HEK293T (cell line): ENCODE measurements at regions of chr17 and their contacts with region 1.

Region 1: DNA sequence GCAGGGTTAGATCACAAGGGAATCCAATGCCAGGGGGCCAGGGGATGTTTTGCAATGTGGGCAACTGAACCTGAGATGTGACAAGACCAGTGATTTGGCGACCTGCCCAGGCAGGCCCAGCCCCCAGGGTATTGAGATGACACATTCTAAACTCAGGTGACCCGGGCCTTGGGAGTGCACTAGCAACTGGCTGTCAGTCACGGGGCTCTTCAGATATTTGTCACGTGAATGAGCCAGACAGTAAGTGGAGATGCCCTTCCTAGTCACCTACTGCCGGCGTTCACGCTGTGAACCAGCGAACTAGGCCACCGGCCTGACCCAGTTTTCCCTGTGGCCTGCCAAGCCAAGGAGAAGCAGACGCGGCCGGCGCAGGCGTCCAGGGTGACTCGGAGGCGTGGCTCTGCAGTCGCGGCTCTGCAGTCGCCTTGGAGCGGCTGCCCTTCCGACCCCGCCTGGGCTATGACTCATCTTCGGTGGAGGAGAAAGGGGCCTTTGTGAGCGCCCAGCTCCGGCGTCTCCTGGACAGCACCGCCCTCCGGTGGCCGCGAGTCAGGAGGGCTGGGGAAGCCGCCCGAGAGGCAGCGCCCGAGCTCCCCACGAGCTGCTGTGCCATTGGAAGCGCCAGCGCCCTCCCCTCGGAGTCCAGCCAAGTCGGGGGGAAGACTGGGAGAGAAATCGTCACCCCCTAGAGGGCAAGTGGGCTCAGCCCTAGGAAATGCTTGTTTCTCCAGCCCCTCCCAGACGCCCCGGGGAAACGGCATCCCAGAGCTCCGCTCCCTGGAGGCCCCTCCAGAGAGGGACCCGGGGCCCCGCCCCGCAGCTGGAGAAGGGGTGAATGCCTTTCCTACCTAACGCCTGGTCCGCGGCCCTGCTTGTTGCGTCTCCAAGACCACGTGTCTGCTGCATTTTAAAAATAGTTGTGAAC is 38.8 kb downstream of the WSB1 start:
- DNase-seq: peak; percentile 79

Region 2: DNA sequence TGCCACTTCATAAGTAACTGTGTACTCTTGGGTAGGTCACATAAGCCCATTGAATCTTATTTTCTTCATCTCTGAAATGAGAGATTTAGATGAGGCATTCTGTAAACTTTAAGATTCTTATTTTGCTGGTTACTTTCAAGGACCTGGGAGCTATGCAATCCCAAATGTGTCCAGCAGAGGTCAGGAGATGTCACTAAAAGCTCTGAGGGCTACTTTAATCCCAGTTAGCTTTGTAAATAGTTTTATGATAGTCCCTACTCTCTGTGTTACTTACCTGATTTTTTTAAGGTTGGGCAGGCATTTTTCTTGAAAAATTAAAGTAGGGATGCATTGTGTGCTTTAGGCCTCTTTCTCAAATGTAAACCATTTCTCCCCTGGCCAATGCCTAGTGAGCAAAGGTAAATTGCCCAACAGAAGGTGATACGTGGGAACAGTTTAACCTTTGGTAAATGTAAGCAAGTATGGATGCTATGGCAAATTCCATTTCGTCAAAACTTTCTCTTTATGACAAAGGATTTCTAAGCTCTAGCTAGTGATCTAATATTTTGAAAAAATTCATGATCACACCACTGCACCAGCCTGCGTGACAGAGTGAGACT is 95.9 kb before region 1 on chr17:
- CTCF ChIA-PET with region 1: interaction called, 19 read pairs
- POLR2A ChIA-PET with region 1: interaction called, 7 read pairs
- DNase-seq: peak; percentile 32

Region 3: GRCh38 chr17:27245230-27245696 is 87.5 kb before region 1 on chr17:
- CTCF ChIA-PET with region 1: interaction called, 16 read pairs
- POLR2A ChIA-PET with region 1: interaction called, 8 read pairs
- DNase-seq: peak; percentile 69

Region 4: DNA sequence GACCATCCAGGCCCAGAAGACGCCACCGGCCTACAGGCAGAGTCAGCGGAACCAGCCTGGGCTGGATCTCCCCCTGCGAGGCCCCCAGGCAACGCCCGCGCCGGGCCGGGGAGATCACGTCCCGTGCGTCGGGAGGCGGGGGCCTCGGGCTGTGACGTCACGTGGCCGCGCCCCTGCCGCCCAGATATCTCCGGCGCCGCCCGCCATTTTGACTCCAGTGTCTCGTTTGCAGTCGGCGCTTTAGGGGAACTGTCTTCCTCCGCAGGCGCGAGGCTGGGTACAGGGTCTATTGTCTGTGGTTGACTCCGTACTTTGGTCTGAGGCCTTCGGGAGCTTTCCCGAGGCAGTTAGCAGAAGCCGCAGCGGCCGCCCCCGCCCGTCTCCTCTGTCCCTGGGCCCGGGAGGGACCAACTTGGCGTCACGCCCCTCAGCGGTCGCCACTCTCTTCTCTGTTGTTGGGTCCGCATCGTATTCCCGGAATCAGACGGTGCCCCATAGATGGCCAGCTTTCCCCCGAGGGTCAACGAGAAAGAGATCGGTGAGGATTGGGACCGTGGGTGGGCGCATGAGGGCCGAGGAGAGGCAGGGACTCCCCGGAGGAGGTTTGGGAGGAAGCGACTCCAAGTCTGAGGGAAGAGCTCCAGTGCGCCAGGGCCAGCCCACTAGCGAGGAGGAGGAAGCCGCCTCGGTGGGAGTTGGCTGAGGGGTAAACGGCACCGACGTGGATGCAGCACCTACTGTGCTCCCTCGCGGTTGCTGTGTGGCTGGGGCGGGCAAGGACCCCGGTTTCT is 38.7 kb before region 1 on chr17 and contains the start of gene WSB1:
- CTCF ChIA-PET with region 1: no interaction called
- POLR2A ChIA-PET with region 1: interaction called, 17 read pairs
- DNase-seq: peak; percentile 86

Region 5: GRCh38 chr17:27320222-27320560 is 12.6 kb before region 1 on chr17:
- CTCF ChIA-PET with region 1: no interaction called
- POLR2A ChIA-PET with region 1: no interaction called
- DNase-seq: no peak

Region 6: GRCh38 chr17:27345141-27345904 is 12.6 kb after region 1 on chr17:
- CTCF ChIA-PET with region 1: interaction called, 3 read pairs
- POLR2A ChIA-PET with region 1: interaction called, 13 read pairs
- DNase-seq: no peak

Region 7: DNA sequence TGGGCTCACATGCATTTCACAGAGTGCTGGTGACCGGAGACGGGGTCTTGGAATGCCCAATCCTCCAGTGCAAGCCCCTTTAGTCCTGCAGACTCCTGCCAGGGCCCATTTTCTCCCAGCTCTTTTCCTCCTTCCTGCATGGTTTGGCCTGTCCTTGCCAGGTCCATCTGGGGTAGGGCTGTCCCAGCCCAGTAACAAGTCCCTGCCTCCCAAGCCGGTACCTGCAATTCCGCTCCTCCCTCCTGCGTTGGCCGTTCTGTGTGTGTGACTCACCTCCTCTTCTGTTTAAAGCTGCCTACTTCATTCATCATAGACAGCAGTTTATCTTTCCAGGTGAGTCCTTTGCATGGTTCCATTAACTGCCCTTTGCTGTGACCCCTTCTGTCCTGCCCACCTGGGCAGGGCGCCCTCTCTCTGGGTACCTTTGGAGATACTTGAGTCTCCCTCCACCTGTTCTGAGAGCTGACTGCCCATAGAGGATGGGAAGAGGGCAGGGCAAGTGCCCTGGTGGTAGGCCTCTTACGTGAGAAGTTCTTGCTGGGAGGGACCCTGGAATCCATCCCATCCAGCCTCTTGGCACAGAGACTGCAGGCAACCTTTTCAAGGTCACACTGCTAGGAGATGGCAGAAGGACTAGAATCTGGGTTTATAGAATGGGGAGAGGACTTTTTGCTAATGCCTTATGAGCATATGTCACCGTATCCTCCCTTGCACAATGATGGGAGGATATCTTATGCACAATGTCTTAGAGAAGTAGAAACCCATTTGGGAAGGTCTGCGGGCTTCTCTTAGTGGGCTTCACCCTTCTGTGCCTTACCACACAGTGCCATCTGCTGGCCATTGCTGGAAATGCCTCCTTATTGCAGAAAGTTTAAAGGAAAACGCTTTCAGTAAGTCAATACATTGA is 268.6 kb after region 1 on chr17:
- CTCF ChIA-PET with region 1: interaction called, 16 read pairs
- POLR2A ChIA-PET with region 1: interaction called, 3 read pairs
- DNase-seq: peak; percentile 58